ENCODE measurements at regions of chr18 and their contacts with region 1.

Region 1: DNA sequence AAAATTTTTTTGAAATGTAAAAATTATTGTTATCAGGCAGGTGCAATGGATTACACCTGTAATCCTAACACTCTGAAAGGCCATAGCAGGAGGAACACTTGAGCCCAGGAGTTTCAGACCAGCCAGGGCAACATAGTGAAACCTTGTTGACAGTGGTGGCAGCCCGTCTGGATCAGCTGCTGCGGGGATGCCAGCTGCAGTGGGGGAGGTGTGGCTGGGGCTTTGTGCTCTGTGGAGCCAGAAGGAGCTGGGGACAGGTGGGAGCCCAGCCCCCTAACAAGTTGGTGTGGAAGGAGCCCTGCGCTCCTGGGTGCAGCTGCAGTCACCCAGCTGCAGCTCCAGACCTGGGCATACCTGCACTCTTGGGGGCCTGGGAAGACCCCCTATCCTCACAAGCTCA is 182.4 kb upstream of the MC4R start:
- DNase-seq: no peak
- H3K4me3 ChIP-seq: no peak overlapping the region
- H3K4me3 Mint-ChIP-seq: no peak overlapping the region
- H3K27ac ChIP-seq: no peak overlapping the region
- H3K27ac Mint-ChIP-seq: no peak overlapping the region
- H3K4me1 ChIP-seq: no peaks in the 10 kb centered on the region
- H3K4me1 Mint-ChIP-seq: no peaks in the 10 kb centered on the region
- H3K27me3 ChIP-seq: no peaks in the 10 kb centered on the region
- H3K27me3 Mint-ChIP-seq: peaks cover 0 to 2% (median 0%) of the 10 kb centered on the region in 3 donors
- CTCF ChIP-seq: no peak

Region 2: GRCh38 chr18:59459369-59460079 is 1095.4 kb before region 1 on chr18:
- intact Hi-C with region 1: loop called in 1 of 2 experiments (anchors 10 kb)
- DNase-seq: no peak
- H3K4me3 ChIP-seq: no peak overlapping the region
- H3K4me3 Mint-ChIP-seq: no peak overlapping the region
- H3K27ac ChIP-seq: no peak overlapping the region
- H3K27ac Mint-ChIP-seq: no peak overlapping the region
- H3K4me1 ChIP-seq: no peaks in the 10 kb centered on the region
- H3K4me1 Mint-ChIP-seq: no peaks in the 10 kb centered on the region
- H3K27me3 ChIP-seq: no peaks in the 10 kb centered on the region
- H3K27me3 Mint-ChIP-seq: peaks cover 2 to 6% (median 2%) of the 10 kb centered on the region in 3 donors
- CTCF ChIP-seq: peak; percentile 54

Region 3: GRCh38 chr18:60228609-60229595 is 326.1 kb before region 1 on chr18:
- intact Hi-C with region 1: no loop called
- DNase-seq: no peak
- H3K4me3 ChIP-seq: no peak overlapping the region
- H3K4me3 Mint-ChIP-seq: no peak overlapping the region
- H3K27ac ChIP-seq: no peak overlapping the region
- H3K27ac Mint-ChIP-seq: no peak overlapping the region
- H3K4me1 ChIP-seq: no peaks in the 10 kb centered on the region
- H3K4me1 Mint-ChIP-seq: no peaks in the 10 kb centered on the region
- H3K27me3 ChIP-seq: no peaks in the 10 kb centered on the region
- H3K27me3 Mint-ChIP-seq: no peaks in the 10 kb centered on the region
- CTCF ChIP-seq: no peak

Measured in CD14-positive monocyte (primary cell).